ENCODE measurements at regions of chr4 and their contacts with region 1.

Region 1: DNA sequence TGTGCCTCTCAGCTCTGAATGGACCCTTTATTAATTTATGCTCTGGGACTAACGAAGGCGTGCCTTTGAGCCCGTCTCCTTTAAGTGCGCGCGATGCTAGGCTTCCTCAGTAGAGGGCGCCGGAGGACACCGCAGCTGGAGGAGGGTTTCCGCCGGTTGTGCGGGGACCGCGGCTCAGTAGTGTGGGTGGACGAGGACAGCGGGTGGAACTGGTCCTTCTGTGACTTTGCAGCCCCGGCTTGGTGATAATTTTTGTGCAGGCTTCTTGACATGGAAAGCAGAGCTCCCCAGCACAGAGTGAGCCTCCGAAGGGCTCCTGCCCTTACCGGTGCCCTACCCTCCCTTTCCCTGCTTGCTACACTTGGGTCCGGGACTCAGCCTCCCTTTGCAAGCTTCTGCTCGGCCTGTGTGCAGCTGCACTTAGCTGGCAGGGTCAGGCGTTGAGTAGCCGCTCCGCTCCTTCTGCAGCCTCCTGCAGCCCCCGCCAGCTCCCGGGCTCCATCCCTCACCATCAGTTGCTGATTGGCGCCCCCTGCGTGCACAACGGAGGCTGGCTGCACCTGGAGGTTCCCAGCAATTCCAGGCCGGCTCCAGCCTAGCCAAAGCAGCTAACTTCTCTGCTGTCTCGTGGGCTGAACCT is 26.8 kb upstream of the BOD1L1 start:
- DNase-seq: peak; percentile 67 to 74 (median 70)
- H3K4me3 ChIP-seq: peak overlapping the region; percentile 76 to 82
- H3K4me3 Mint-ChIP-seq: peak overlapping the region; percentile 89 to 94 (median 90)
- H3K27ac ChIP-seq: no peak overlapping the region
- H3K27ac Mint-ChIP-seq: peak overlapping the region in 3 of 7 donors; percentile 49 to 74 (median 63)
- H3K4me1 ChIP-seq: peaks cover 7% of the 10 kb centered on the region
- H3K4me1 Mint-ChIP-seq: peaks cover 8 to 19% (median 11%) of the 10 kb centered on the region in 4 donors
- H3K27me3 ChIP-seq: no peaks in the 10 kb centered on the region
- H3K27me3 Mint-ChIP-seq: peaks cover 6 to 13% of the 10 kb centered on the region in 2 donors

Region 2: DNA sequence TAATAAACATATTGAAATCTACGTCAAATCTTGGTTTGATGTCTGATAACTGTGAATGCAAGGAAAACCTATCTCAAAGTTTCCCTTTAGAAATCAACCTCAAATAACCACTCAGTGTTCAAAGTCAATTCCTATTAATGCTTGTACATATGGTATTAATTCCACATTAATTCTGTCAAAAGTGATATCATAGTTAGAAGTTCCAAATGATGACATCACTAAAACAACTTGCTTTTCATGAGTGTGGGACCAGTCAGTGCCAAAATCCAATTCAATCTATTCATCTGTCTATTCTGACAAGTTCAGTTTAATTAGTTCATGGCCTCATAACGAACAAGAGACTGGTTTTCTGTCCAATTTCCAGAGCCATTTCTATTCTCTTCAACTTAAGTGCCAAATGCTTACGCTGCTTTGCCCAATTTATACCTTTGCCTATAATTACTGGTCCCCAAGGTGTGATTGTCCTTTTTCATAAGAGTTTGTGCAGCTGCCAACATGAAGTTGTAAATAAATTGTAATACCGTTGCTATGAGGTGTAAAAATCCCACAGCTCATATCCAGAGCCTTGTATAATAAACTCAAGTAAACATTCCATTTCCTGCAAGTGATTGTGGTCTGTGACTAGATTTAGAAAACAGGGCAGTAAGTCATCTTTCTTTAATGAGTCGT is 646.3 kb before region 1 on chr4:
- CTCF ChIA-PET with region 1: no interaction called
- POLR2A ChIA-PET with region 1: no interaction called
- intact Hi-C with region 1: no loop called
- DNase-seq: no peak
- H3K4me3 ChIP-seq: no peak overlapping the region
- H3K4me3 Mint-ChIP-seq: no peak overlapping the region
- H3K27ac ChIP-seq: no peak overlapping the region
- H3K27ac Mint-ChIP-seq: no peak overlapping the region
- H3K4me1 ChIP-seq: no peaks in the 10 kb centered on the region
- H3K4me1 Mint-ChIP-seq: no peaks in the 10 kb centered on the region
- H3K27me3 ChIP-seq: no peaks in the 10 kb centered on the region
- H3K27me3 Mint-ChIP-seq: no peaks in the 10 kb centered on the region

Region 3: GRCh38 chr4:13322681-13323101 is 331.6 kb before region 1 on chr4:
- CTCF ChIA-PET with region 1: no interaction called
- POLR2A ChIA-PET with region 1: no interaction called
- intact Hi-C with region 1: no loop called
- DNase-seq: no peak
- H3K4me3 ChIP-seq: no peak overlapping the region
- H3K4me3 Mint-ChIP-seq: no peak overlapping the region
- H3K27ac ChIP-seq: no peak overlapping the region
- H3K27ac Mint-ChIP-seq: no peak overlapping the region
- H3K4me1 ChIP-seq: no peaks in the 10 kb centered on the region
- H3K4me1 Mint-ChIP-seq: no peaks in the 10 kb centered on the region
- H3K27me3 ChIP-seq: no peaks in the 10 kb centered on the region
- H3K27me3 Mint-ChIP-seq: no peaks in the 10 kb centered on the region

Region 4: GRCh38 chr4:13544606-13545393 is 109.5 kb before region 1 on chr4:
- CTCF ChIA-PET with region 1: no interaction called
- POLR2A ChIA-PET with region 1: no interaction called
- intact Hi-C with region 1: no loop called
- DNase-seq: no peak
- H3K4me3 ChIP-seq: peak overlapping the region in 1 of 2 donors; percentile 27
- H3K4me3 Mint-ChIP-seq: peak overlapping the region; percentile 68 to 89 (median 80)
- H3K27ac ChIP-seq: no peak overlapping the region
- H3K27ac Mint-ChIP-seq: peak overlapping the region in 2 of 7 donors; percentile 37 to 84
- H3K4me1 ChIP-seq: peaks cover 78% of the 10 kb centered on the region
- H3K4me1 Mint-ChIP-seq: peaks cover 26 to 63% (median 44%) of the 10 kb centered on the region in 4 donors
- H3K27me3 ChIP-seq: peaks cover 63% of the 10 kb centered on the region
- H3K27me3 Mint-ChIP-seq: peaks cover 51 to 56% of the 10 kb centered on the region in 2 donors

Region 5: GRCh38 chr4:13627606-13628301 is 26.5 kb before region 1 on chr4 and contains the start of gene BOD1L1:
- CTCF ChIA-PET with region 1: interaction called, 42 read pairs
- POLR2A ChIA-PET with region 1: interaction called, 18 read pairs
- intact Hi-C with region 1: loop called (anchors 1 kb)
- DNase-seq: peak; percentile 71 to 83 (median 78)
- H3K4me3 ChIP-seq: peak within 1 kb of the TSS; percentile 70 to 95
- H3K4me3 Mint-ChIP-seq: peak within 1 kb of the TSS; percentile 94 to 98 (median 97)
- H3K27ac ChIP-seq: peak within 1 kb of the TSS; percentile 81
- H3K27ac Mint-ChIP-seq: peak within 1 kb of the TSS; percentile 93 to 99 (median 98)
- H3K4me1 ChIP-seq: peaks cover 41% of the 10 kb centered on the region
- H3K4me1 Mint-ChIP-seq: peaks cover 30 to 57% (median 46%) of the 10 kb centered on the region in 4 donors
- H3K27me3 ChIP-seq: no peaks in the 10 kb centered on the region
- H3K27me3 Mint-ChIP-seq: no peaks in the 10 kb centered on the region
- total RNA-seq, gene BOD1L1: 67.8 to 72.3 TPM

Region 6: DNA sequence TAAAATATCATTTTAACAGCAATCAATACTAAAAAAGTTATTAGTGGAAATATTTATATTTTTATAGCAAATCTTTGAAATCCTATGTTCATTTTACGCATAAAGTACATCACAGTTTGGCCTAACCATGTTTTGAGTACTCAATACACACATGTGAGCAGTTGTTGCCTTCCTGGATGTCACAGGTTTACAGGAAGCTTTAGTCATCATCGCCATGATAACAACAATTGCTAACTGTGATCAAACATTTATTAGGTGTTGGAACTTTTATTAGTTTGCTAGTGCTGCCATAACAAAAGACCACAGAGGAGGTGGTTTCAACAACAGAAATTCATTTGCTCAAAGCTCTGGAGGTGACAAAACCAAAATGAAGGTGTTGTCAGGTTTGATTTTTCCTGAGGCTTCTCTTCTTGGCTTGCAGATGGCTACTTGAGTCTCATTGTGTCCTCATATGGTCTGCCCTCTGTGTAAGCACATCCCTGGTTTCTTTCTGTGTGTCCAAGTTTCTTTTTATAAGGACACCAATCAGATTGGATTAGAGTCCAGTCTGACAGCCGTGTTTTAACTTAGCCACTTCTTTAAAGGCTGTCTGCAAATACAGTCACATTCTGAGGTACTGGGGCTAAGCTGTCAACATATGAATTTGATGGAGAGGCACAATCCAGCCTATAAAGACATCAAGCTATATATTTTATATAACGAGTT is 16.3 kb after region 1 on chr4:
- CTCF ChIA-PET with region 1: interaction called, 19 read pairs
- POLR2A ChIA-PET with region 1: no interaction called
- intact Hi-C with region 1: no loop called
- DNase-seq: no peak
- H3K4me3 ChIP-seq: no peak overlapping the region
- H3K4me3 Mint-ChIP-seq: no peak overlapping the region
- H3K27ac ChIP-seq: no peak overlapping the region
- H3K27ac Mint-ChIP-seq: no peak overlapping the region
- H3K4me1 ChIP-seq: no peaks in the 10 kb centered on the region
- H3K4me1 Mint-ChIP-seq: no peaks in the 10 kb centered on the region
- H3K27me3 ChIP-seq: no peaks in the 10 kb centered on the region
- H3K27me3 Mint-ChIP-seq: peaks cover 6 to 22% of the 10 kb centered on the region in 2 donors

Region 7: DNA sequence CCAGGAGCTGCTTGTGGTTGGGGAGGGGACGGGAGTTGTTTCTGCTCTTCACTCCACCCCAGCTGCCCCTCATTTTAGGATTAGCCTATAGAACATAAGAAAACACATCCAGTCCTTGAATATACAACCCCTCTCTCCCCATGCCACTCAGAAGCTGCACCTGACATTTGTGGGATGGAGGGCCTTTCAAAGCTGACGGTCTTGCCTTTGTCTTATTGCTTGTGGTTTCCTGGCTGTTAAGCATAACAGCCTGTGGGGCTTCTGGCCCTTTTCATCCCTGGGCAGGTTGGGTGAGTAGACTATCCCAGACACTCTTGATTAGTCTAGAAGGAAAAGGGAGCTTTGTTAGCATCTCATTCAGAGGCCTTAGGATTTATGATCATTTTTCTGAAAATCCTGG is 380.8 kb after region 1 on chr4:
- CTCF ChIA-PET with region 1: no interaction called
- POLR2A ChIA-PET with region 1: no interaction called
- intact Hi-C with region 1: no loop called
- DNase-seq: no peak
- H3K4me3 ChIP-seq: no peak overlapping the region
- H3K4me3 Mint-ChIP-seq: no peak overlapping the region
- H3K27ac ChIP-seq: no peak overlapping the region
- H3K27ac Mint-ChIP-seq: no peak overlapping the region
- H3K4me1 ChIP-seq: no peaks in the 10 kb centered on the region
- H3K4me1 Mint-ChIP-seq: no peaks in the 10 kb centered on the region
- H3K27me3 ChIP-seq: no peaks in the 10 kb centered on the region
- H3K27me3 Mint-ChIP-seq: no peaks in the 10 kb centered on the region

Region 8: DNA sequence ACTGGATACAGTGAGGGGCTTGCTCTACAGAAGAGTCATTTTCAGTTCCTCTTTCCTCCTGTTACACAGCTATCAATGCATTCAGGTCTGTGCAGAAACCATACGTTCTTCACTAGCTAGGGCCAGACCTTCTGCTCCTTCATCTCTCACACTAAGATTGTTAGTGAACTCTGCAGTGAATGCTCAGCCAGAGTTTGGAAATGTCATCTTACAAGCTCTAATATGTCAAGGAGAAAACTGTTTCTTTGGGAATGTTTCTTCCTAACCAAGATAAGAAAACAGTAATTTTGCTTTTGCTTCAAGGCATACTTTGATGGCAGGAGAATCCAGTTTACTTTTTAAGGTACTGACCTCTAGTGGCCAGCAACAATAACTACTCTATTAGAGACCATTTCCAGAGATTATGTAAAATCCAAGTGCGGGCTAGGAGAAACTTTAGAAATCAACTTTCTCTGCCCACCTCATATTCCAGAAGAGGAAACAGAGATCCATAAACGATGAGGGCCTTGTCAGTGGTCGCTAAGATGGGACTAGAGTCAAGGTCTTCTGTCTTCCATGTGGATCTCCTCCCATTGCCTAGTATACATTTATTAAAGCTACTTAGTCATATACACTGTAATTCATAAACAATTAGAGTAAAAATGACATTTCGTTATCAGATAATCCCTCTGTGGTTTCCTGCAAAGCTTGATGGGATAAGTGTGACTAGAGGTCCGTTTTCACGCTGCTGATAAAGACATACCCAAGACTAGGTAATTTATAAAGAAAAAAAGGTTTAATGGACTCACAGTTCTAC is 1803.3 kb after region 1 on chr4:
- CTCF ChIA-PET with region 1: interaction called, 8 read pairs
- POLR2A ChIA-PET with region 1: no interaction called
- intact Hi-C with region 1: loop called (anchors 1 kb)
- DNase-seq: peak in 4 of 5 donors; percentile 38 to 42 (median 40)
- H3K4me3 ChIP-seq: no peak overlapping the region
- H3K4me3 Mint-ChIP-seq: no peak overlapping the region
- H3K27ac ChIP-seq: no peak overlapping the region
- H3K27ac Mint-ChIP-seq: no peak overlapping the region
- H3K4me1 ChIP-seq: no peaks in the 10 kb centered on the region
- H3K4me1 Mint-ChIP-seq: peaks cover 0 to 2% (median 0%) of the 10 kb centered on the region in 4 donors
- H3K27me3 ChIP-seq: no peaks in the 10 kb centered on the region
- H3K27me3 Mint-ChIP-seq: no peaks in the 10 kb centered on the region